Panc1 (cell line): ENCODE measurements at regions of chr6 and their contacts with region 1.

Region 1: DNA sequence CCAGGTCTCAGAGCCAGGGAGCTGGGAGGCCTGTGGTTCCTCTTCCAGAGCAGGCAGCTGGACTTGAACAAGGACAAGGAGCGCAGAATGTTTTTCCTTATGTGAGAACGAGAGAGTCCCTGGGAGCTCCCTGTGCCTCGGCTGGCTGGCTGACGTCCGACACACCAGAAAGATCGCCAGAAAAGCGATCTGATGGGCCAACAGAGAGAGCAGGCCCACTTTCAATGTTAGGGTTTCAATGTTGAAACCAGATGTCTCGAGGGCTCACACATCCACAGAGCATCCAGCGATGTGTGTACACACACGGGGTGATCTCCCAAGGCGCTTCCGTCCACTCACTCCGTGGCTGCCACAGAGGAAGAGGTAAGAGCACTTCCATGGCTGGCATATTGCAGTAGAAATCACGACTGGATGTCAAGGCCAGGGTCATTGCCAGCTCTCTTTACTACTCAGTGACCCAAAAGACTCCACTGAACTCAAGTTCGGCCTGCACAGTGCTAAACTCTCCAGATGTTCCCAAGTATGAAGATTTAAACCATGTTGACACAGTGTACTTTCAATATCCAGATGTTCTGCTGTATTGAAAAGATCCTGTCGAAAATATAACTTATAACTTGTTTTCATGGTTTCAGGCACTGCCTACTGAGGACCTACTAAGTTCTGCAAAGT is 70.8 kb upstream of the FOXC1 start:
- DNase-seq: no peak
- ATAC-seq: no peak
- H3K4me3 ChIP-seq: no peak overlapping the region
- H3K27ac ChIP-seq: no peak overlapping the region
- H3K4me1 ChIP-seq: no peaks in the 10 kb centered on the region
- H3K27me3 ChIP-seq: no peaks in the 10 kb centered on the region; the same call in 1 of the 2 replicates
- CTCF ChIP-seq: no peak

Region 2: DNA sequence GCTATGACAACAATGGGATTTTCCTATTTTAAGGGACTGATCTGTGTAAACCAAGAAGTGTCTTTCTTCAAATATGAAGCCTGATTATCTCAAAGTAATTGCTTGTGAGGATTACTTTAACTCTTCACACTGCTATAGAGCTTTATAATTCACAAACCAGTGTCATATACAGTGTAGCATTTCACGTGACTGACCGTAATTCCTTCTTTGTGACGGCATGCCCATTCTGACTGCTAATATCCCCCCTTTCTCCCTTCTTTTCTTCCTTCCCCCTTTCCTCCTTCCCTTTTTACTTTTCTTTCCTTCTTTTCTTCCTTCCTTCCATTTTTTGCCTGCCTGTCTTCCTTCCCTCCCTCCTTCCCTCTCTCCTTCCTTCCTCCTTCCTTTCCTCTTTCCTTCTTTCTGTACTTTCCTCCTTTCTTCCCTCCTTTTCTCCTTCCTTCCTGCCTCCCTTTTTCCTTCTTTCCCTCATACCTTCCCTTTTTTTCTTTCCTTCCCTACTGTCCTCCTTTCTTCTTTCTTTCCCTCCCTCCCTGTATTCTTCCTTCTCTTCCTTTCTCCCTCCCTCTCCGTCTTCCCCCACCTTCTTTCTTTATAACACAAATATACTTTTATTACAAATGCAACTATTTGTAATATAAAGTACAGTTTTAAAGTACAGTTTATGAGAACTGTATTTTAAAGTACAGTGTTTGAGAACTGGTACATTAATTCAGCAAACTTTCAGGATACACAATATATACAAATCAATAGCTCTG is 771.0 kb before region 1 on chr6:
- CTCF ChIA-PET with region 1: interaction called, 10 read pairs
- POLR2A ChIA-PET with region 1: no interaction called
- in situ Hi-C with region 1: no loop called
- intact Hi-C with region 1: no loop called
- DNase-seq: no peak
- ATAC-seq: no peak
- H3K4me3 ChIP-seq: no peak overlapping the region
- H3K27ac ChIP-seq: no peak overlapping the region
- H3K4me1 ChIP-seq: 0 out of 2 replicates have a peak, but pooled peaks cover 7% of the 10 kb centered on the region
- H3K27me3 ChIP-seq: peaks cover 14% of the 10 kb centered on the region
- CTCF ChIP-seq: no peak

Region 3: DNA sequence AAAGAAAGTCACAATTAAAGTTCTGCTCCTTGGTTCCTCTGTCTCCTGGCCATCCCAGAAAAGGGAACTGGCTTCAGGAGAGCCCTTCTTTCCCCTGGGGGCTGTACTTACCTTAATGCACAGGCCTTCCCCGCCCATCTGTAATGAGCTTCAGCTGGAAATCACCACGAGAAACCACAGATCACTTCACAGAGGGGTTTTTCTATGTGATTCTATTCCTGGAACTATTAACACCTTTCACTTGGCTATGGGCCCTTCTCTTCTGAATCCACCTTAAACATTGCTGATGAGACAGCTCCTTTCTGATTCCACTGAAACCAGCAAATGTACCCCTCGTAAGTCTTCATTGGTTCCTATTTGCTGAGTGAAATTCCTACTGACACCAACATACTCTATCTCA is 68.9 kb before region 1 on chr6:
- CTCF ChIA-PET with region 1: no interaction called
- POLR2A ChIA-PET with region 1: no interaction called
- in situ Hi-C with region 1: no loop called
- intact Hi-C with region 1: no loop called
- DNase-seq: no peak
- ATAC-seq: no peak
- H3K4me3 ChIP-seq: no peak overlapping the region
- H3K27ac ChIP-seq: no peak overlapping the region
- H3K4me1 ChIP-seq: no peaks in the 10 kb centered on the region
- H3K27me3 ChIP-seq: no peaks in the 10 kb centered on the region
- CTCF ChIP-seq: no peak